ENCODE measurements at regions of chr5 and their contacts with region 1.

Region 1: GRCh38 chr5:159504857-159505304 is 174.6 kb upstream of the IL12B start:
- DNase-seq: peak in 1 of 2 donors; percentile 70
- H3K4me3 ChIP-seq: no peak overlapping the region
- H3K27ac ChIP-seq: peak overlapping the region; percentile 76 to 86
- H3K4me1 ChIP-seq: peaks cover 11 to 30% of the 10 kb centered on the region in 2 donors
- H3K27me3 ChIP-seq: no peaks in the 10 kb centered on the region
- CTCF ChIP-seq: no peak

Region 2: GRCh38 chr5:159451197-159452052 is 53.5 kb before region 1 on chr5:
- intact Hi-C with region 1: loop called (anchors 2 kb)
- DNase-seq: peak; percentile 16 to 83
- H3K4me3 ChIP-seq: no peak overlapping the region
- H3K27ac ChIP-seq: peak overlapping the region; percentile 72 to 79
- H3K4me1 ChIP-seq: peaks cover 0 to 15% of the 10 kb centered on the region in 2 donors
- H3K27me3 ChIP-seq: no peaks in the 10 kb centered on the region
- CTCF ChIP-seq: no peak

Measured in ascending aorta (tissue), 2 donors.